ENCODE measurements at regions of chr2 and their contacts with region 1.

Region 1: GRCh38 chr2:170770606-170771420 is 635 bp downstream of the ERICH2 start:
- DNase-seq: peak; percentile 77
- ATAC-seq: peak; percentile 90
- H3K4me3 Mint-ChIP-seq: peak overlapping the region; percentile 76
- H3K27ac Mint-ChIP-seq: peak overlapping the region; percentile 44
- H3K4me1 Mint-ChIP-seq: peaks cover 12% of the 10 kb centered on the region
- H3K27me3 Mint-ChIP-seq: peaks cover 21% of the 10 kb centered on the region
- CTCF ChIP-seq: no peak

Region 2: DNA sequence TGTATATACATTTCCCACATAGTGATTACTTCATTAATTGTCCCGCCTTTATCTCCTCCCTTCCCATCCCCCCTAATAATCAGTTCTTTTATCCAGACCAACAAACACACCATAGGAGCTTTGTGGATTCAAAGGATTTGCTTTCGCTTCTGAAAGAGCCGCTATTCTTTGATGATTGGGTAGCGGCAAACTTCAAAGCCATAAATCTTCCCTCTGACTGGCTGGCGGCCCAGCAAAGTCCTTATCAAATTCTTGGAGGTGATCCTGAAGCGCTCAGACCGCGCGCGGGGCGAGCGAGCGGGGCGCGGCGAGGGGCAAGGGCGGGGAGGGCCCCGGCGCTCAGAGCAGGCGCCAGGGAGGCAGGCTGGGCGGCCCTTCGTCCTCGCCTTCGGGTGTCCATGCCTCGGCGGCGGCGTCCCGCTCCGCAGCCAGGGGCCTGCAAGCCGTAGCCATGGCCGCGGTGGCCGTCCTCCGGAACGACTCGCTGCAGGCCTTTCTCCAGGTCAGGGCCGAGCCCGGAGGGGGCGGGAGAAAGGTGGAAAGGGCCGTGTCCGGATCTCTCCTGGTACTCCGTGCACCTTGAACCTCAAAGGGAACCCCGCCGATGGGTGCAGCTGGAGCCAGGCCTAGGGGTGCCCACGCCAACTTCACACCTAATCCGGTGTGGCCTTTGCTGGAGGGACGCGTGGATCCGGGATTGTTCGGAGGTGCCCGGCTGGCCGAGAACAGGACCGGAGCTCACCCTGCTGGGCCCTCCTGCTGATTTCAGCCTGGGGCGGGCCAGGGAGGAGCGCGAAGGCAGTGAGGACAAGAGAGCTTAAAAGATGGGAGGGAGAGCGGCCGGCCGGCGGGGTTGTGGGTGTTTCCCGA is 55.5 kb before region 1 on chr2 and contains the start of gene SP5:
- CTCF ChIA-PET with region 1: no interaction called
- POLR2A ChIA-PET with region 1: no interaction called
- intact Hi-C with region 1: loop called (anchors 5 kb)
- DNase-seq: peak; percentile 41
- ATAC-seq: no peak
- H3K4me3 Mint-ChIP-seq: peak within 1 kb of the TSS; percentile 72
- H3K27ac Mint-ChIP-seq: no peak within 1 kb of the TSS
- H3K4me1 Mint-ChIP-seq: peaks cover 33% of the 10 kb centered on the region
- H3K27me3 Mint-ChIP-seq: peaks cover 72% of the 10 kb centered on the region
- CTCF ChIP-seq: no peak
- total RNA-seq, gene SP5: not detected

Region 3: DNA sequence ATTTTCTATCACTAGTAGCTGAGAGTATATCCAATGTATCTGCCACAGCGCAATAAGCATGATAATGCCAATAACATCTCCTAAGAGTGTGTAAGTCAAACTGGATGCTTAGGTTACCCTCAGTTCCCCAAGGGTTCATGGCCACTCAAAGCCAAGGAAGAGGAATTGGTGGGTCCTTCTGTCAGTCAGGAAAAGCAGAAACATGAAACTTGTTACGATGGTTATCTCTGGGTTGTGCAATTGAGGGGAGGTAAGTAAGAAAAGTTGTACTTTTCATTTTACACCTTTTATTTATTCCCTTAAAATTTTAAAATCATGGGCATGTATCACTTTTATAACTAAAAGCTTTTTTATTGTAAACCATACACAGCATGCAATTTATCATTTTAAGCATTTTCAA is 35.7 kb after region 1 on chr2:
- CTCF ChIA-PET with region 1: no interaction called
- POLR2A ChIA-PET with region 1: no interaction called
- intact Hi-C with region 1: no loop called
- DNase-seq: no peak
- ATAC-seq: no peak
- H3K4me3 Mint-ChIP-seq: no peak overlapping the region
- H3K27ac Mint-ChIP-seq: no peak overlapping the region
- H3K4me1 Mint-ChIP-seq: no peaks in the 10 kb centered on the region
- H3K27me3 Mint-ChIP-seq: peaks cover 5% of the 10 kb centered on the region
- CTCF ChIP-seq: no peak